A549 (cell line): ENCODE measurements at regions of chr11 and their contacts with region 1.

Region 1: DNA sequence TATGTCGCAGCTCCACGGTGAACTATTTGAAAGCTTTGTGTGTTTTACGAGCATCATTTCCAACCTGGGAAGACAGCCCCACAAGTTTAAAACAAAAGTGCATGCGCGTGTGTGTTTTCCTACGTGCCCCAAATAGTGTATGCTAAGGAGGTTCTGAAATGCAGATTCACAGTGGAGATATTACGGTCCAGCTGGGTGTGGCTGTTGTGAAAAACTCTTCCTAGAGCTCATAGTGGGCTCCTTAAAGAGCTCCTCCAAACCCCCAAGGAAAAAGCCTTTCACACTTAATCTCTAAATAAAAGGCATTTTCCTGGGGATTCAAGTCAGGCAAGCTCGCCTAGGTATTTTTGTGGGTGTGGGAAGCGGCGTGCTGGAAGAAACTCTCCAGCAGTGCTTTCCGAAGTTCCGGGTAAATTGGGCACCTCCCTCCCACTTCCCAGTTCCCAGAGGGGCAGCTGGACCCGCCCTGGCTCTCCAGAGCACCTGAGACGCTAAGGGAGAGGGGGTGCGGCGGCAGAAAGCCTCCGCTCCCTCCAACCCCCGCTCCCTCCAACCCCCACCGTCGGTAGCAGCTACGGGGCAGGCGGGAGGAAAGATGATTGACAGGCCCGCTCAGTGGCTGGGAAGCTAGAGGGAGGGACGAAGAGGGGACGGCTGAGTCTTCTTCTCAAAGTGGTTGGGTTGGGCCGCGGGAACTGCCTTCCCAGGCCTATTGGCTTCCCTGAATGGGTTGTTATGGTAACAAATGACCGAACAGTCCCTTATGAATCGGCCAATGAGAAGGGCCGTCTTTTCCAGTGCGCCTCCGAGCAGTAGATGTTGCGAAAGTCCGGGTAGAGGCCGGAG is 558 bp upstream of the PCF11 start:
- DNase-seq: peak; percentile 98 to 100
- ATAC-seq: peak; percentile 93 to 94
- H3K4me3 ChIP-seq: peak overlapping the region; percentile 64
- H3K27ac ChIP-seq: peak overlapping the region; percentile 93 to 96
- H3K4me1 ChIP-seq: peaks cover 29% of the 10 kb centered on the region
- CTCF ChIP-seq: no peak
- EP300 ChIP-seq: no peak
- POLR2A ChIP-seq: peak; percentile 56; the same call in 1 of the 2 replicates
- RAD21 ChIP-seq: no peak

Region 2: GRCh38 chr11:82900277-82901164 is 255.9 kb before region 1 on chr11 and contains the start of gene PRCP:
- CTCF ChIA-PET with region 1: interaction called, 4 read pairs
- POLR2A ChIA-PET with region 1: interaction called, 28 read pairs
- DNase-seq: peak; percentile 91 to 94
- ATAC-seq: peak; percentile 90 to 95
- H3K4me3 ChIP-seq: peak within 1 kb of the TSS; percentile 72
- H3K27ac ChIP-seq: peak within 1 kb of the TSS; percentile 81 to 93
- H3K4me1 ChIP-seq: peaks cover 13% of the 10 kb centered on the region
- CTCF ChIP-seq: no peak
- EP300 ChIP-seq: no peak
- POLR2A ChIP-seq: peak; percentile 83
- RAD21 ChIP-seq: no peak; a peak in 1 of 5 replicates
- polyA plus RNA-seq, gene PRCP: 86.0 and 86.2 TPM in 2 replicates

Region 3: GRCh38 chr11:83071567-83072349 is 84.6 kb before region 1 on chr11 and contains the start of gene RAB30:
- CTCF ChIA-PET with region 1: interaction called, 3 read pairs
- POLR2A ChIA-PET with region 1: interaction called, 32 read pairs
- DNase-seq: peak; percentile 99 to 100
- ATAC-seq: peak; percentile 95 to 98
- H3K4me3 ChIP-seq: peak within 1 kb of the TSS; percentile 84
- H3K27ac ChIP-seq: peak within 1 kb of the TSS; percentile 89 to 92
- H3K4me1 ChIP-seq: peaks cover 25% of the 10 kb centered on the region
- CTCF ChIP-seq: no peak
- EP300 ChIP-seq: no peak
- POLR2A ChIP-seq: peak; percentile 72
- RAD21 ChIP-seq: no peak
- polyA plus RNA-seq, gene RAB30: 6.2 and 7.0 TPM in 2 replicates

Region 4: DNA sequence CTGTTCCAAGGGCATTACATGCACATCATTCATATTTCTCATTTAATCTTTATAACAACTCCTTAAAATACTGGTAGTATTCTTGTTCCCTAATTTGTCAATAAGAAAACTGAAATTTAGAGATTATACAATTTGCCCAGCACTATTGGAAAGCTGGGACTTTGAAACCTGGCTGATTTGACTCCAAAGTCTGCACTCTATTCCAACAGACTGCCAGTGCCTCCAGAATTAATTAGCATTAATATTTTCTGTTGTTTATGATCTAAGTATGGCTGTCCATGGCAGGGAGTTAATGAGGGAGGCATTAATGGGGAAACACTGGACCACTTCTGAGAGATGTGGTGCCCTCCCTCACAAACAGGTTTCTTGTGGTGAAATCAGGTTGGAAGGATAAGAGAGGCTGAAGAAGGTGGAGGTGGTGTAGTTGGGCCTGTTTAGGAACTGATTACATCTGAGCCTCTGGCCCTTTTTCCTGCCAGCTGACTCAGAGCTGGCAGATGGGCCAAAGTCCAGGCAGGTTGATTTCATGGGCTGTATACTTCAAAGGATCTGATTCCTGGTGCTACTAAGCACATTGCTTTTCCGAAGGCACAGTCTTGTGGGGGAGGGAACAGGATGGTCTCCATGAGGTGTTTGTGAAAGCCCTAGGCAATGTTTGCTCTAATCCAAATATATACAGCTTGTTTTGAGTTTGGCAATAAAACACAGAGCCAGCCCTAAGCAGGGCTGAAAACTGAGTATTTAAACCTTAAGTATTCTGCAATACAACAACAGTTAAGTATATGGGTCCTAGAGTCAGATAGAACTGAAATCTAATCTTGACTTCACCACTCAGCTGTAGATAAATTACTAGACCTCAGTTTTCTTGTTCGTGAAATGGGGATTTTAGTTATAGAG is 63.6 kb before region 1 on chr11:
- CTCF ChIA-PET with region 1: interaction called, 11 read pairs
- POLR2A ChIA-PET with region 1: interaction called, 44 read pairs
- DNase-seq: peak; percentile 50 to 84
- ATAC-seq: peak; percentile 91 to 96
- H3K4me3 ChIP-seq: no peak overlapping the region
- H3K27ac ChIP-seq: peak overlapping the region; percentile 54 to 82
- H3K4me1 ChIP-seq: peaks cover 23% of the 10 kb centered on the region
- CTCF ChIP-seq: no peak
- EP300 ChIP-seq: 0 out of 5 replicates have a peak, but pooled peaks of 1 of the 2 experiments have one; percentile 32
- POLR2A ChIP-seq: no peak
- RAD21 ChIP-seq: no peak; a peak in 2 of 5 replicates

Region 5: GRCh38 chr11:83115551-83115950 is 40.8 kb before region 1 on chr11:
- CTCF ChIA-PET with region 1: no interaction called
- POLR2A ChIA-PET with region 1: no interaction called
- DNase-seq: no peak
- ATAC-seq: peak in 1 of 2 experiments; percentile 21; a peak in 2 of 6 replicates
- H3K4me3 ChIP-seq: no peak overlapping the region
- H3K27ac ChIP-seq: no peak overlapping the region
- H3K4me1 ChIP-seq: no peaks in the 10 kb centered on the region
- CTCF ChIP-seq: no peak
- EP300 ChIP-seq: no peak
- POLR2A ChIP-seq: no peak
- RAD21 ChIP-seq: no peak

Region 6: GRCh38 chr11:83285771-83286528 is 129.6 kb after region 1 on chr11 and contains the start of gene CCDC90B:
- CTCF ChIA-PET with region 1: no interaction called
- POLR2A ChIA-PET with region 1: interaction called, 11 read pairs
- DNase-seq: peak; percentile 97 to 98
- ATAC-seq: peak; percentile 96 to 97
- H3K4me3 ChIP-seq: peak within 1 kb of the TSS; percentile 81
- H3K27ac ChIP-seq: peak within 1 kb of the TSS; percentile 93 to 95
- H3K4me1 ChIP-seq: peaks cover 7% of the 10 kb centered on the region; the same call in 2 of the 3 replicates
- CTCF ChIP-seq: peak; percentile 57
- EP300 ChIP-seq: 0 out of 5 replicates have a peak, but pooled peaks of 1 of the 2 experiments have one; percentile 1
- POLR2A ChIP-seq: peak; percentile 85
- RAD21 ChIP-seq: 0 out of 5 replicates have a peak, but pooled peaks of 1 of the 2 experiments have one; percentile 10
- polyA plus RNA-seq, gene CCDC90B: 57.4 and 80.5 TPM in 2 replicates

Region 7: DNA sequence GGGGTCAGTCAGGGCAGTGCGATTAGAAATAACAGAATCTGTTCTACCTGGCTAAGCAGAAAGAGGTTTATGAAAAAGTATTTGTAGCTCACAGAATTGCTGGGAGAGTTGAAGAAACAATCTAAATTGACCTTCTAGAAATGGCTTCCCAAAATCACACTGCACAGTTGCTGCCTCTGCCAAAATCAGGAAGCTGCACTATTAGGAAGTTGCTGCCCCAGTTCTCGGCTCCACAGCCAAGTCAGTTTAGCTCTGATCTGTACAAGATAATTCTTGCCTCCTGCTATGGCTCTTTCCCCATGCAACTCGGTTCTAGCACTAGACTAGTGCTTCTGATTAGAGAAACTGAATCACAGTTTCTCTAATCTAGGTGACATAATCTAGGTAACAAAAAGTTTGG is 145.8 kb after region 1 on chr11:
- CTCF ChIA-PET with region 1: no interaction called
- POLR2A ChIA-PET with region 1: no interaction called
- DNase-seq: no peak
- ATAC-seq: no peak
- H3K4me3 ChIP-seq: no peak overlapping the region
- H3K27ac ChIP-seq: no peak overlapping the region
- H3K4me1 ChIP-seq: no peaks in the 10 kb centered on the region
- CTCF ChIP-seq: no peak
- EP300 ChIP-seq: no peak
- POLR2A ChIP-seq: no peak
- RAD21 ChIP-seq: no peak